Transverse colon (tissue), 4 donors: ENCODE measurements at regions of chr15 and their contacts with region 1.

Region 1: GRCh38 chr15:85840065-85840801 is 45.5 kb upstream of the KLHL25 start:
- DNase-seq: peak; percentile 96
- H3K4me3 ChIP-seq: peak overlapping the region in 2 of 4 donors; percentile 4 to 45
- H3K27ac ChIP-seq: peak overlapping the region; percentile 81 to 92 (median 88)
- H3K4me1 ChIP-seq: peaks cover 5 to 46% (median 27%) of the 10 kb centered on the region in 4 donors
- H3K27me3 ChIP-seq: peaks cover 6% of the 10 kb centered on the region
- CTCF ChIP-seq: peak; percentile 86 to 94 (median 88)
- EP300 ChIP-seq: no peak
- POLR2A ChIP-seq: peak; percentile 78

Region 2: DNA sequence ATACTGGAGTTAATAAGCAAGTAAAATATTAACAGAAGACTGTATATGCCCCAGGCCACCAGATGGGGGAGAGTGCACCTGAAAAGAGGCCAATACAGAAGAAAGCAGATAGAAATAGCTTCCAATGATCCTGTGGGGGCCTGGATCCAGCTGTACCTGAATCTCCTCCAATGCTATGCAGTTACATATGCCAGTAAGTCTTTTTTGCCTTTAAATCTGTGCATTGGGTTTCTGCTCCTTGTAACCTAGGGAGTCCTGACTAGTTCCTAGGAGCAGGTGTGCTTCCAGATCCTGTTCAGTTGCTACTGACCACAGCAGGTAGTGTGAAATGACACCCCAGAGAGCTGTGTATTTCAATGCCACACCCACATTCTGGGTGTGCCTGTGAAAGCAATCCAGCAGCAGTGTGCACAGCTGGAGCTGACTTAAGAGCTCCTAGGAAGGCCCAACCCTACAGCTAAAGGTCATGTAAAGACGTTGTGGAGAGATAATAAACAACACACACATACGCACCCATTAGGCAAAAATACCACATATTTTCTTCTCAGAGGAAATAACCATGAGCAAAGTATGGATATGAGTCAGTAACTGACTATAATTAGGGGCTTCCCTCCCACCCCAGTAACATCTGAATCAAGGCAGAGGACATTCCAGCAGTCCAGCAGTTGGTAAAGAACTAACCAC is 522.0 kb before region 1 on chr15:
- in situ Hi-C with region 1: loop called in 2 of 4 experiments (anchors 25 kb)
- intact Hi-C with region 1: no loop called
- DNase-seq: peak; percentile 84
- H3K4me3 ChIP-seq: no peak overlapping the region
- H3K27ac ChIP-seq: peak overlapping the region; percentile 77 to 87 (median 86)
- H3K4me1 ChIP-seq: peaks cover 13 to 42% (median 33%) of the 10 kb centered on the region in 4 donors
- H3K27me3 ChIP-seq: no peaks in the 10 kb centered on the region
- CTCF ChIP-seq: peak in 2 of 5 experiments; percentile 20 to 37
- EP300 ChIP-seq: no peak
- POLR2A ChIP-seq: peak; percentile 72

Region 3: GRCh38 chr15:85730001-85730820 is 110.0 kb before region 1 on chr15:
- in situ Hi-C with region 1: loop called in 2 of 4 experiments (anchors 5 to 10 kb)
- intact Hi-C with region 1: no loop called
- DNase-seq: no peak
- H3K4me3 ChIP-seq: no peak overlapping the region
- H3K27ac ChIP-seq: peak overlapping the region in 3 of 4 donors; percentile 13 to 41 (median 14)
- H3K4me1 ChIP-seq: peaks cover 6 to 33% (median 17%) of the 10 kb centered on the region in 4 donors
- H3K27me3 ChIP-seq: no peaks in the 10 kb centered on the region
- CTCF ChIP-seq: peak; percentile 69 to 84 (median 73)
- EP300 ChIP-seq: no peak
- POLR2A ChIP-seq: no peak